Activated naive CD4-positive, alpha-beta T cell treated with anti-CD3 and anti-CD28 coated beads for 36 hours (primary cell): ENCODE measurements at regions of chr6 and their contacts with region 1.

Region 1: GRCh38 chr6:146700078-146700686 is 101.4 kb downstream of the ADGB start:
- DNase-seq: peak; percentile 57
- H3K4me3 Mint-ChIP-seq: no peak overlapping the region
- H3K27ac Mint-ChIP-seq: no peak overlapping the region
- H3K4me1 Mint-ChIP-seq: no peaks in the 10 kb centered on the region
- H3K27me3 Mint-ChIP-seq: no peaks in the 10 kb centered on the region

Region 2: DNA sequence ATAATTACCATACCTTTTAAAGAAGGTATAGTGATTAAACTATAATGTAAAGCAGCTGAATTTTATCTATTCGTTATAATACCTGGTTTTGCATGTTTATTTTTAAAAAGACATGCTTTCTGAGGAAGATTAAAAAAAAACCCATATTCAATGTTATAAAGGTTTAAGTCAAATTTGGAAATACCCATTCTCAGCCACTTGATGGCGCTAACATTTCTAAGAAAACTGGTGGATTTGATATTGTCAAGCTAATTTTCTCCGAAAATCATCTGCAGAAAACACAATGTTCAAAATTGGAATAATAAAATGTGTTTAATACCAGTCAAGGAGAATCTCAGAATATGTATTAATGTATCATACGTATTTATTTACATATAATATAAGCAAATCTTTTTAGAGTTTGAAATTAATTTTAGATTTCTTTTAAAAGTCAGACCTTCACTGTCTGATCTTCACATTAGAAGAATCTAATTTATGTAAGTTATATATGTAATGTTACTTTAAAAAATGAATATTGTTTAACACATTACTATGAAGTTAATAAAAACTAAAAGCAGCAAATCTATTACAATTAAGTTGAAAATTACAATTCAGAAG is 771.0 kb before region 1 on chr6:
- CTCF ChIA-PET with region 1: interaction called, 13 read pairs
- intact Hi-C with region 1: loop called (anchors 1 kb)
- DNase-seq: peak; percentile 9
- H3K4me3 Mint-ChIP-seq: no peak overlapping the region
- H3K27ac Mint-ChIP-seq: no peak overlapping the region
- H3K4me1 Mint-ChIP-seq: no peaks in the 10 kb centered on the region
- H3K27me3 Mint-ChIP-seq: no peaks in the 10 kb centered on the region

Region 3: GRCh38 chr6:146029573-146030184 is 670.5 kb before region 1 on chr6:
- CTCF ChIA-PET with region 1: no interaction called
- intact Hi-C with region 1: loop called (anchors 10 kb)
- DNase-seq: no peak
- H3K4me3 Mint-ChIP-seq: no peak overlapping the region
- H3K27ac Mint-ChIP-seq: no peak overlapping the region
- H3K4me1 Mint-ChIP-seq: peaks cover 9% of the 10 kb centered on the region
- H3K27me3 Mint-ChIP-seq: peaks cover 55% of the 10 kb centered on the region

Region 4: DNA sequence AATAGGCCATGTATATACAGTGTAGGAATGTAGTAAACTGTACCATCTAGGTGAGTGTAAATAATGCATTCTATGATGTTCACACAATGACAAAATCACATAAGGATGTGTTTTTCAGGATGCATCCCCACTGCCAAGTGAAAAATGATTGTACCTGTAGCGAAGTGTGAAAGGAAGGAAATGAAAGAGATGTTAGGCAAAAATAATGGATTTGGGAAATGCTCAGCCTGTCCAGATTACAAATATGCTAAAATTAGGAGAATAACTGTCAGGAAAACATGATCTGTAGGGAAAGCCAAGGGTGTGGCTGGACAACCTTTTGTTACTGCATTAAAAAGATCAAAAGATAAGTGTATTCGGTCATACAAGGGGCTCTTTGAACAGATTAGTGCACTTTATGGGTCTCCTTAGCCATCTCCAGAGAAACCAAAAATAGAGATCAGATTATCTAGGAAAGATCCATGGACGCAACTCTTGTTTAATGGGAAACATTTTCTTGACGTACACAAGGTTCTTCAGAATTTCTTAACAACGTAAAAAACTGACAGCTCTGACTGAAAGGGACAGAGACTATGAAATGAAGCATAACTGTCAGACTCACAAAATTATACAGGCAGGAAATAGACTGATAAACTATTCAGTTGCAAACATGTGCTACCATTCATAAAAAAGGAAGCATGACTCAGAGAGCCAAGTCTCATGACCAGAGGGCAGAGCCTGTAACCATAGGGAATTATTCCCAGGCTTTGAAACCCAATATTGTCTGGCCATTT is 410.2 kb before region 1 on chr6:
- CTCF ChIA-PET with region 1: no interaction called
- intact Hi-C with region 1: no loop called
- DNase-seq: no peak
- H3K4me3 Mint-ChIP-seq: no peak overlapping the region
- H3K27ac Mint-ChIP-seq: no peak overlapping the region
- H3K4me1 Mint-ChIP-seq: no peaks in the 10 kb centered on the region
- H3K27me3 Mint-ChIP-seq: peaks cover 4% of the 10 kb centered on the region

Region 5: DNA sequence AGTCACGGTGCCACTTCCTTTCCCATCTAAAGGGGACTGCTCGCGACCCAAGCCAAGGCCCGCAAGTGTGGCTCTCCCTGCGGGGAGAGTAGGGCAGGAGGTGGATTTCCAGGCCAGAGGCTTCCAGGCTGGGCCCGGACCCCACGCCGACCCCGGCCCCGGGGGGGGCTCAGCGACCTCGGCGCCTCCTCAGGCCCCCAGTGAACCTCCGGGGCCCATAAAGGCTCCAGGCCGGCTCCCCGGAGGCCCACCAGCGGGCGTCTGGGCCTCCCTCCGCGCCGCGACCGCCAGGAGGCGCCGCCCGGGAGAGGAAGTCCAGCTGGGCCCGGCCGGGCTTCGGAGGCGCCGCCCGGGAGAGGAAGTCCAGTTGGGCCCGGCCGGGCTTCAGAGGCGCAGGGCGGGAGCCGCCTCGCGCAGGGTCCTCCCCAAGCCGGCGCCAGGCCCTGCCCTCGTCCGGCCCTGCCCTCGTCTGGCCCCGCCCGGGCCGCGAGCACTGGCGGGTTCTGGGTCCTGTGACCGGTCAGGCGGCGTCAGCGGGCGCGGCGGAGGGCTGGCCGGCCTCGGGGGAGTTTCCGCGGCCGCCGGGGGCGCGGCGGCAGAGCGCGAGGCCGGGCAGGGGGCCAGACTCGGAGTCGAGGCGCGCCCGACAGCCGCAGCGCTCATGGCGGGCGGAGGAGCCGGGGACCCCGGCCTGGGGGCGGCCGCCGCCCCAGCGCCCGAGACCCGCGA is 156.8 kb before region 1 on chr6 and contains the start of gene RAB32:
- CTCF ChIA-PET with region 1: no interaction called
- intact Hi-C with region 1: loop called (anchors 5 kb)
- DNase-seq: no peak
- H3K4me3 Mint-ChIP-seq: peak within 1 kb of the TSS; percentile 59
- H3K27ac Mint-ChIP-seq: no peak within 1 kb of the TSS
- H3K4me1 Mint-ChIP-seq: peaks cover 6% of the 10 kb centered on the region
- H3K27me3 Mint-ChIP-seq: peaks cover 41% of the 10 kb centered on the region
- total RNA-seq, gene RAB32: 0.25 TPM in 1 of 2 experiments, not detected in the other

Region 6: DNA sequence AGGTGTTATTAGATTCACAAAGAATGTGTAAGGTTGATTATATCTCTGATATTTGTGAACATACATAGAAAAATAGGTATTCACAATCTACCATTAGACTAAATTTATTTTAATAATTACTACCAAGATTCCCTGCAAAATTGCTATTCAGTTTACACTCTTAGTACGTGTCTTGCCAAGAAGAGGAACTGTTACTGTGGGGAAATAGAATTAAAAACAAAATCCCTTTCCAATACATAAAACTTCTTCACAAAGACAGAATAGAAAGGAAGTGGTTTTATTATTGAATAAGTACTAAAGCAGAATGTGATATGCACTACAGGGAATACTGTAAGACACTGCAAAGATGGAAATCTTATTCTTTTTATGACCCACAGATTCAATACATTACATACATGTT is 139.6 kb before region 1 on chr6:
- CTCF ChIA-PET with region 1: no interaction called
- intact Hi-C with region 1: no loop called
- DNase-seq: no peak
- H3K4me3 Mint-ChIP-seq: no peak overlapping the region
- H3K27ac Mint-ChIP-seq: no peak overlapping the region
- H3K4me1 Mint-ChIP-seq: no peaks in the 10 kb centered on the region
- H3K27me3 Mint-ChIP-seq: peaks cover 3% of the 10 kb centered on the region

Region 7: GRCh38 chr6:146785001-146785585 is 84.9 kb after region 1 on chr6:
- CTCF ChIA-PET with region 1: no interaction called
- intact Hi-C with region 1: loop called (anchors 2 kb)
- DNase-seq: peak; percentile 52
- H3K4me3 Mint-ChIP-seq: no peak overlapping the region
- H3K27ac Mint-ChIP-seq: no peak overlapping the region
- H3K4me1 Mint-ChIP-seq: no peaks in the 10 kb centered on the region
- H3K27me3 Mint-ChIP-seq: no peaks in the 10 kb centered on the region